T-cell (primary cell): ENCODE measurements at regions of chr1 and their contacts with region 1.

Region 1: GRCh38 chr1:36369061-36369861 is 16.5 kb downstream of the STK40 start:
- DNase-seq: peak; percentile 61 to 91 (median 82)
- ATAC-seq: peak; percentile 38 to 70 (median 43)
- H3K4me3 ChIP-seq: no peak overlapping the region
- H3K4me3 Mint-ChIP-seq: peak overlapping the region in 1 of 3 donors; percentile 19
- H3K27ac ChIP-seq: peak overlapping the region; percentile 33
- H3K27ac Mint-ChIP-seq: peak overlapping the region; percentile 85 to 90
- H3K4me1 ChIP-seq: peaks cover 43 to 67% of the 10 kb centered on the region in 2 experiments
- H3K4me1 Mint-ChIP-seq: peaks cover 65 to 78% (median 74%) of the 10 kb centered on the region in 3 donors
- H3K27me3 ChIP-seq: no peaks in the 10 kb centered on the region
- H3K27me3 Mint-ChIP-seq: no peaks in the 10 kb centered on the region

Region 2: GRCh38 chr1:36198641-36199040 is 170.6 kb before region 1 on chr1:
- CTCF ChIA-PET with region 1: interaction called in 1 of 2 experiments, 3 read pairs
- POLR2A ChIA-PET with region 1: interaction called in 1 of 2 experiments, 10 read pairs
- DNase-seq: no peak
- ATAC-seq: no peak
- H3K4me3 ChIP-seq: no peak overlapping the region
- H3K4me3 Mint-ChIP-seq: no peak overlapping the region
- H3K27ac ChIP-seq: no peak overlapping the region
- H3K27ac Mint-ChIP-seq: no peak overlapping the region
- H3K4me1 ChIP-seq: no peaks in the 10 kb centered on the region
- H3K4me1 Mint-ChIP-seq: no peaks in the 10 kb centered on the region
- H3K27me3 ChIP-seq: peaks cover 0 to 21% of the 10 kb centered on the region in 2 experiments
- H3K27me3 Mint-ChIP-seq: peaks cover 0 to 4% of the 10 kb centered on the region in 2 donors

Region 3: DNA sequence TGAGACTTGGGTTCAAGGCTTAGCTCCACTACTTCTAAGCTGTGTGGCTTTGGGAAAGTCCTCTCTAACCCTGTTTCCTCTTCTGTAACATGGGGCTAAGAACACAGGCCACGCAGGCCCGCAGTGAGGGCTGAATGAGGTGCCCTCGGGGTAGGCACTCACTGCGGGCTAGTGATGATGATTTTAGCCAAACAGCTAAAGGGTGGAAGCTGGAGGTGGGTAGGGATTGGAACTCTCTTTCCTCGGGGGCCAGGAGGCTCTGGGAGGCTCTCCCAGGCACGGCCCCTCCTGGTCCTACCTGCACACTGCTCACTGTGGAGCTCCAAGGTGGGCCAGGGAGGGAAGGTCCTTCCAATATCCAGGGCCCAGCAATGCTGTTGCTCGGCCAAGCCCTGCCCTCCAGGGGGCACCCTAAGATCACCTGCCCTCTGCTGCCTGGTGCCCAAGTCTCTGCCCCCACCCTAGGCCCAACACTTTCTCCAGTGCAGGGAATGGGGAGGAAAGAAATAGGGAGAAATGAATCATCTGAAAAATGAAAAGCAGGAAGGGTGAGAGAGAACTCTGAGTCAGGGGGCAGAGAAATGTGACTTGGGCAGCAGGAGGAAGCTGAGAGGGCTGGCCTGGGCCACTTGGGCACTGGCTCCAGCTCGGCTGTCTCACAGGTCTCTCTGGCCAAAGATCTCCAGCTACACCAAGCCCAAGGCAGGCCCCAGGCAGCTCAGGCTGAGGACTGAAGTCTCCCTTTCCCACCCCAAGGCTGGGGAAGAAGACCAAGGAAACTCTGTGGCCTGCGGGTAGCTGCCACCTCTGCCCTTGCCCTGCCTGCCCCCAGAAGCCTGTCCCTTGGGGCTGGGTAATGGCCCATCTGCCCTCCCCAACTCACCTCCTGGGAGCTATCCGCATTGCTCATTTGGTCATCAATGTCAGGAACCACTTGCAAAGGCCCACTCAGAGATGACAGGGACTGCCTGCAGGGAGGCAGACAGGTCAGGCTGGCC is 26.5 kb before region 1 on chr1:
- CTCF ChIA-PET with region 1: interaction called, 9 to 24 read pairs
- POLR2A ChIA-PET with region 1: interaction called in 1 of 2 experiments, 3 read pairs
- DNase-seq: peak in 31 of 35 experiments; percentile 16 to 79 (median 54)
- ATAC-seq: peak; percentile 76 to 94 (median 82)
- H3K4me3 ChIP-seq: no peak overlapping the region
- H3K4me3 Mint-ChIP-seq: no peak overlapping the region
- H3K27ac ChIP-seq: no peak overlapping the region
- H3K27ac Mint-ChIP-seq: peak overlapping the region; percentile 28 to 49
- H3K4me1 ChIP-seq: peaks cover 0 to 20% of the 10 kb centered on the region in 2 experiments
- H3K4me1 Mint-ChIP-seq: peaks cover 21 to 33% (median 29%) of the 10 kb centered on the region in 3 donors
- H3K27me3 ChIP-seq: no peaks in the 10 kb centered on the region
- H3K27me3 Mint-ChIP-seq: no peaks in the 10 kb centered on the region

Region 4: GRCh38 chr1:36350659-36351226 is 18.5 kb before region 1 on chr1:
- CTCF ChIA-PET with region 1: interaction called, 7 to 12 read pairs
- POLR2A ChIA-PET with region 1: no interaction called
- DNase-seq: peak; percentile 14 to 78 (median 56)
- ATAC-seq: peak; percentile 89 to 100 (median 94)
- H3K4me3 ChIP-seq: no peak overlapping the region
- H3K4me3 Mint-ChIP-seq: peak overlapping the region in 1 of 3 donors; percentile 61
- H3K27ac ChIP-seq: peak overlapping the region; percentile 8
- H3K27ac Mint-ChIP-seq: peak overlapping the region; percentile 88 to 91
- H3K4me1 ChIP-seq: peaks cover 2 to 29% of the 10 kb centered on the region in 2 experiments
- H3K4me1 Mint-ChIP-seq: peaks cover 16 to 29% (median 24%) of the 10 kb centered on the region in 3 donors
- H3K27me3 ChIP-seq: no peaks in the 10 kb centered on the region
- H3K27me3 Mint-ChIP-seq: no peaks in the 10 kb centered on the region

Region 5: DNA sequence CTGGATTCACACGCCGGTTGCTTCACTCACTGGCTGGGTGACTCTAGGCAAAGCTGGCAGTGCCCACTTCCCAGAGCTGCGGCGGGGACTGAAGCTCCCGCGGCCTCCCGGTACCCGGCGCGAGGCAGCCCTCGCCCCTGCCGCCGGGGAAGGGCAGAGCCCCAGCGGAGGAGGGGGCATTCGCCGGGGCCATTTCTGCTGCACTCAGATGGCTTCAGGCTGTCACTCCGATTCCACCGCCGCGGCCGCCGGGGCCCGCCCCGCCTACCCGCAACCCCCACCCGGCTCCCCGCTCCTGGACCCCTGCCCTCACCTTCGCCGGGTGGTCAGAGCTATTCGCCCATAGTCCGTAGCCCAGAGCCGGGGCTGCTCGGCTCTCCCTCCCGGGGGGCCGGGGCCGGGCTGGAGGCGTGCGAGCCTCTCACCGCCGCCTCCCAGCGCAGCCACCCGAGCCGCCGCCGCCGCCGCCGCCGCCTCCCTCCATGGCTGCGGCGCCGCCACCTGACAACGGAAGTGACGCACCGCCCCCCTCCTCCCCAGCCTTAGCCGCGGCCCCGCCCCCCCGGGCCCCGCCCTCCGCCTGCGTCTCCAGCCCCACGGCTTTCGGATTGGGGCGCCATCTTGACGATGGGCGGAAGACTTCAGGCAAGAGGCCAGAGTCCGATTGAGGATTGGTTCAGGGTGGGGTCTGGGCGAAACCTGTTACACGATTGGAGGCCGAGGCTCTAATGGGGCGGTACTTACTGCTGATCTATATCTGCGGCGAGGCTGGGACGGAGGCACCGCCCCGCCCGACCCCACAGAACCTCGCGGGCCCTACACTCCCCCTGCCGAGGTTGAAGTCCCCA is 16.4 kb after region 1 on chr1 and contains the start of gene STK40:
- CTCF ChIA-PET with region 1: interaction called, 3 to 13 read pairs
- POLR2A ChIA-PET with region 1: interaction called in 1 of 2 experiments, 6 read pairs
- DNase-seq: peak; percentile 94 to 99 (median 98)
- ATAC-seq: peak; percentile 87 to 91 (median 88)
- H3K4me3 ChIP-seq: peak within 1 kb of the TSS; percentile 89 to 96
- H3K4me3 Mint-ChIP-seq: peak within 1 kb of the TSS; percentile 84 to 98 (median 90)
- H3K27ac ChIP-seq: peak within 1 kb of the TSS; percentile 89
- H3K27ac Mint-ChIP-seq: peak within 1 kb of the TSS; percentile 99
- H3K4me1 ChIP-seq: peaks cover 13 to 53% of the 10 kb centered on the region in 2 experiments
- H3K4me1 Mint-ChIP-seq: peaks cover 50 to 66% (median 60%) of the 10 kb centered on the region in 3 donors
- H3K27me3 ChIP-seq: no peaks in the 10 kb centered on the region
- H3K27me3 Mint-ChIP-seq: no peaks in the 10 kb centered on the region
- total RNA-seq, gene STK40: 29.6 to 71.1 (median 56.7) TPM